ENCODE measurements at regions of chr14 and their contacts with region 1.

Region 1: GRCh38 chr14:55354500-55354899 is 57.1 kb downstream of the ATG14 start:
- DNase-seq: no peak
- H3K4me3 ChIP-seq: no peak overlapping the region
- H3K27me3 ChIP-seq: no peaks in the 10 kb centered on the region
- CTCF ChIP-seq: peak; percentile 75

Region 2: DNA sequence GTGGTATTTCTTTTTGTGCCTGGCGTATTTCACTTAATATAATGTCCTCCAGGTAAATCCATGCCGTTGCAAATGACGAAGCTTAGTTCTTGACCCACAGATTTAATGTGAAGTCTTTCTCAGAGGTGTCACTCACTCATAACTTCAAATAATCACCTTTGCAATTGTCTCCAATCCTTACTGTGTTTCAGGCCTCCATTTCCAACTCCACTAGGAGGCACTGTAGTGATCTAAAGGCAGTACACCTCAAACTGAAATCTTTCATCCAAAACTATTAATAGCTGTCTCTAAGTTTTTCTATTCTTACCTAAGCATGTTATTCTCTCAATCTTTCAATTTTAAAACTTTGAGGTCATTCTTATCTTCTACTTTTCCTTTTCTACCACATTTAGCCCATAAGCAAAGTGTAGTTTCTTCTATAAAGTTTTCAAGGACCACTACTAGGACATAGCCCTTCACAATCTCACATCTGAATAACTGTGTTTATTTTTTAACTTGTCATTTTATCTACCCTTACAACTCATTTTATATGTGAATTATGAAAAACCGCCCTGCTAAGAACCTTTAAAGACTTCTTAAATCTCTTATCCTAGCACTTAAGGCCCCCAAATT is 108.7 kb before region 1 on chr14:
- CTCF ChIA-PET with region 1: interaction called, 30 read pairs
- POLR2A ChIA-PET with region 1: no interaction called
- DNase-seq: no peak
- H3K4me3 ChIP-seq: no peak overlapping the region
- H3K27me3 ChIP-seq: peaks cover 8% of the 10 kb centered on the region
- CTCF ChIP-seq: peak; percentile 84

Region 3: GRCh38 chr14:55270832-55271565 is 83.5 kb before region 1 on chr14 and contains the start of gene FBXO34:
- CTCF ChIA-PET with region 1: interaction called, 29 read pairs
- POLR2A ChIA-PET with region 1: no interaction called
- DNase-seq: peak; percentile 63
- H3K4me3 ChIP-seq: peak within 1 kb of the TSS; percentile 90
- H3K27me3 ChIP-seq: no peaks in the 10 kb centered on the region; the same call in 1 of the 2 replicates
- CTCF ChIP-seq: peak; percentile 100
- polyA plus RNA-seq, gene FBXO34: 15.0 and 16.9 TPM in 2 replicates

Region 4: GRCh38 chr14:55333711-55334485 is 20.6 kb before region 1 on chr14:
- CTCF ChIA-PET with region 1: interaction called, 10 read pairs
- POLR2A ChIA-PET with region 1: interaction called, 3 read pairs
- DNase-seq: no peak
- H3K4me3 ChIP-seq: no peak overlapping the region
- H3K27me3 ChIP-seq: no peaks in the 10 kb centered on the region
- CTCF ChIP-seq: no peak

Region 5: GRCh38 chr14:55341781-55342180 is 12.7 kb before region 1 on chr14:
- CTCF ChIA-PET with region 1: interaction called, 19 read pairs
- POLR2A ChIA-PET with region 1: no interaction called
- DNase-seq: no peak
- H3K4me3 ChIP-seq: no peak overlapping the region
- H3K27me3 ChIP-seq: no peaks in the 10 kb centered on the region
- CTCF ChIP-seq: no peak

Region 6: DNA sequence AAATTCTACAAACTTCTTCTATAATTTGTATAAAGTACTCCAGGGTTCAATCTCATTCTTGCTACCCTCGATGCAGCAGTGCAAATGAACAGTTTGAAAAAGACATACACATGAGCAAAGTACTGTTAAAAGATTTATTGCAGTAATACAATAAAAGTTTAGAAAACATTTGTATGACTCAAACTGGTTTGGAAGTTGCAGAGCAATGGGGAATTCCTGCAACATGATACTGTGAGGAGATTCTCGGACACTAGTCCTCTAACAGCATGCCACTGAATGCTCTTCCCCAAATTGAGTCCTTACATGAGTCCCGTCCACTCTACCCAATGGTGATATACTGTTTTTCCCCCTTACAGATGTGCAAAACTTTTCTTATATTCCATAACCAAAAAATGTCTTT is 11.8 kb after region 1 on chr14:
- CTCF ChIA-PET with region 1: interaction called, 23 read pairs
- POLR2A ChIA-PET with region 1: no interaction called
- DNase-seq: peak; percentile 47
- H3K4me3 ChIP-seq: no peak overlapping the region
- H3K27me3 ChIP-seq: no peaks in the 10 kb centered on the region
- CTCF ChIP-seq: no peak

Region 7: DNA sequence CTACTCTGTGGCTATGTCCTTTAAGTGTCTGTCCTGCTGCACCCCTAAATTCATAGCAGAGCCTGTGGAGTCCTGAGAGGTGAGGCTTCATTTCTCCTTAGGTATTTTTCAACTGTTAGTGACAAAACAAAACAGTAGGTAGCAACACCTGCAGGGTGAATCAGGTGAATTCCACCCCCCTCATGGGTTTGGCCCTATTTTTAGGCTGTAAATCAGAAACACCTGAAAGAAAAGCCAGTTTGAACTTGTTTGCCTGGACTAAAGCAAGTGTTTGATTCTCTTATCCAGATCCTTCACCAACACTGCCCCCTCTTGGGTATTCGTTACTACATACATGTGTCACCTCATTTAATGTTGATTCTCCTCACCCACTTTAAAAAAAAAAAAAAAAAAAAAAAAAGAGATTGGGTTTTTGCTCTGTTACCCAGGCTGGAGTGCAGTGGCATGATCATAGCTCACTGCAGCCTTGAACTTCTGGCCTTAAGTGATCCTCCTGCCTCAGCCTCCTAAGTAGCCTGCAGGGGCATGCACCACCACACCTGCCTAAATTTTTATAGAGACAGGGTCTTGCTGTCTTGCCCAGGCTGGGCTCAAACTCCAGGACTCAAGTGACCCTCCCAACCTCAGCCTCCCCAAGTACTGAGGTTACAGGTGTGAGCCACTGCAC is 75.7 kb after region 1 on chr14:
- CTCF ChIA-PET with region 1: interaction called, 16 read pairs
- POLR2A ChIA-PET with region 1: no interaction called
- DNase-seq: peak; percentile 32
- H3K4me3 ChIP-seq: no peak overlapping the region
- H3K27me3 ChIP-seq: 0 out of 2 replicates have a peak, but pooled peaks cover 2% of the 10 kb centered on the region
- CTCF ChIP-seq: peak; percentile 55